ENCODE measurements at regions of chr1 and their contacts with region 1.

Region 1: GRCh38 chr1:150578965-150579798 is at the start of gene MCL1:
- DNase-seq: peak; percentile 96
- H3K4me3 ChIP-seq: peak within 1 kb of the TSS; percentile 77 to 97 (median 85)
- H3K27ac ChIP-seq: peak within 1 kb of the TSS; percentile 89
- H3K4me1 ChIP-seq: peaks cover 19% of the 10 kb centered on the region
- H3K27me3 ChIP-seq: no peaks in the 10 kb centered on the region
- CTCF ChIP-seq: peak in 1 of 2 donors; percentile 9
- total RNA-seq, gene MCL1: 289 to 455 TPM

Region 2: DNA sequence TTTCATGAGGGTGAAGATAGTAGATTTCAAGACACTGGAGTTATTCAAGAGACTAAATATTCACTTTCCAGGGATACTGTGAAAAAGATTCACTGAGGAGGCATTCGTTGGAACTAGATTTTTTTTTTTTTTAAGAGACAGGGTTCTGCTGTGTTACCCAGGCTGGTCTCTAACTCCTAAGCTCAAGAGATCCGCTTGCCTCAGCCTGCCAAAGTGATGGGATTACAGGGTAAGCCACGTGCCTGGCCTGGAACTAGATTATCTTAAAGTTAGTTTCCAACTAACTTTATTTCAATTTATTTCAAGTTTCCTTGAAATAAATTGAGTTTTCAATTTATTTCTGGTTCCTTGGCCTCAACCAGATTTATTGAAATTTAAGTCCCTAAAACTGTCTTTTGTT is 24.5 kb after region 1 on chr1:
- CTCF ChIA-PET with region 1: no interaction called
- dilution Hi-C with region 1: no loop called
- in situ Hi-C with region 1: no loop called
- intact Hi-C with region 1: loop called (anchors 1 kb)
- DNase-seq: no peak
- H3K4me3 ChIP-seq: no peak overlapping the region
- H3K27ac ChIP-seq: peak overlapping the region; percentile 97
- H3K4me1 ChIP-seq: peaks cover 22% of the 10 kb centered on the region
- H3K27me3 ChIP-seq: no peaks in the 10 kb centered on the region
- CTCF ChIP-seq: no peak

Region 3: GRCh38 chr1:150613061-150613920 is 34.1 kb after region 1 on chr1:
- CTCF ChIA-PET with region 1: no interaction called
- dilution Hi-C with region 1: no loop called
- in situ Hi-C with region 1: no loop called
- intact Hi-C with region 1: loop called (anchors 1 kb)
- DNase-seq: peak; percentile 93
- H3K4me3 ChIP-seq: no peak overlapping the region
- H3K27ac ChIP-seq: peak overlapping the region; percentile 99
- H3K4me1 ChIP-seq: peaks cover 53% of the 10 kb centered on the region
- H3K27me3 ChIP-seq: no peaks in the 10 kb centered on the region
- CTCF ChIP-seq: no peak

Region 4: DNA sequence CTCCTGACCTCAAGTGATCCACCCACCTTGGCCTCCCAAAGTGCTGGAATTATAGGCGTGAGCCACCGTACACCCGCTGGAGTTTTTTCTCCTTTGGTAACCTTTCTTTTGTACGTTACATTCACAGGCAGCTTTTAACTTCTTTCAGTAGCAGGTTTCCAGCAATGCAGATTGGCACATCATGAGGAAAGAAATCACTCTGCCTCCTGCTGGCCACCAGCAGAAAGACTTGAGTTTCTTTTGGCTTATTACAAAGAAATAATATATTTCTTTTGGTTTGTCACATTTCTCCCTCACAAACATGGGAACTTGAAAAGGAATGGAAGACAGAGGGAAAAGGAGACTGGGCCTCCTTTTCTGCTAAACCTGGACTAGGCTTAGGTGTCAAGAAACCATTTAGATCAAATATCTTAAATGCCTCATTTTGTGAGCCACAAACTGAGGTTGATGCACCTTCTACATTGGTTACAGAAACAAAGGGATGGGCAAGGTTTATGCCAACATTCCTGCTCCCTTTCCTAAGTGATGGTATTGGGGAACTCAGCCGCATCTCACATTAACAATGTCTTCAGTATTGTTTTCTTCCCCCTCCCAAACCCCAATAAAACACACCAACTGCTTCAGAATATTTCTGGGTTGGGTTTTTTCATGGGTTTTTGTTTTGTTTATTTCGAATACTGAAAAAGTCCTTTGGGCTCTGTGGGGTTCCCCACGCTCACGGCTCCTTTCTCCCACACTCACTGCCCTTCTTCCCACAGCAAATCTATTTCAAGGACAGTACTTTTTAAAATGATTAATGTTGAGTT is 42.5 kb after region 1 on chr1:
- CTCF ChIA-PET with region 1: no interaction called
- dilution Hi-C with region 1: loop called (anchors 5 kb)
- in situ Hi-C with region 1: no loop called
- intact Hi-C with region 1: loop called (anchors 1 kb)
- DNase-seq: no peak
- H3K4me3 ChIP-seq: no peak overlapping the region
- H3K27ac ChIP-seq: peak overlapping the region; percentile 30
- H3K4me1 ChIP-seq: peaks cover 62% of the 10 kb centered on the region
- H3K27me3 ChIP-seq: no peaks in the 10 kb centered on the region
- CTCF ChIP-seq: peak; percentile 60 to 65

Region 5: DNA sequence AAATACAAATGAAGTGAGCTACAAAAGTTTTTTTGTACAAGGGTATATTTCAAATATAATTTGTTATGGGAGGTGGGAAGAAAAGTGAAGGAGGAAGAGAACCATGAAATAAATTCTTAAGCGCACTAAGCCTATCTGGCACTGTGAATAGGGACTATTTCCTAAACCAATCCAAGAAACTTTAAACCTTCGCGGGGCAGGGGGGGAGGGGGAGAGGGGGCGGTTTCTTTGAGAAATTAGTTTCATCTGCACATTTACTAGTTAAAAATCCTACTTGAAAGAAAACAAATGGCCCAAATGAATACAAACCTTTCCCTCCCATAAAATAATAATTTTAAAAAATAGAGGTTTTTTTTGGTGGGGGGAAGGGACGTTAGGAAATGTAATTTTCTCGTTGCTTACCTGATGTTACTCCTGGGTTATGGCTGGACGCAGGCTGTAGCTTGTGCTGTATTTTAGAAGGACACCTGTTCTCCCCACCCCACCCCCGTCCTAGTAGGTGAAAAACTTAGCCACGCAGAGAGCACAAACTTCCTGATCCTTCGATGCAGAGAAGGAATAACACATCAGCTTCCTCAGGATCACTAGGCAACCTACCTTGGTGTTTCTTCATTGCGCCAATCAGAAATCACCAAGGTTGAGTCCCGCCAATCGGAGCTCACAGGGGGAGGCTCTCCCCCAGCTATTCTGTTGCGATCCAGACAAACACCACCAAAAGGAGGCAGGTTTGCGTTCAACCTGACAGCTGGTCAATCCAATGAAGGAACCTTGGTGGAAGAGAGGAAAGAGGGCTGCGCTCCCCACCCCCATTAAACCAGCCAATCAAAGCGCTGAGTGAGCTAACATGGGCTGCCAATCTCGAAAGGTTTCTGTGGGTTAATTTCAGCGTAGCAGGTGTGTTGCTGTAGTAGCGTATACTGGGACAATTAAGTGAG is 117.7 kb after region 1 on chr1 and contains the start of gene GOLPH3L:
- CTCF ChIA-PET with region 1: no interaction called
- dilution Hi-C with region 1: no loop called
- in situ Hi-C with region 1: no loop called
- intact Hi-C with region 1: loop called (anchors 5 kb)
- DNase-seq: peak; percentile 100
- H3K4me3 ChIP-seq: peak within 1 kb of the TSS; percentile 59 to 90 (median 60)
- H3K27ac ChIP-seq: peak within 1 kb of the TSS; percentile 65
- H3K4me1 ChIP-seq: peaks cover 8% of the 10 kb centered on the region
- H3K27me3 ChIP-seq: no peaks in the 10 kb centered on the region
- CTCF ChIP-seq: peak in 1 of 2 donors; percentile 31
- total RNA-seq, gene GOLPH3L: 11.7 to 22.4 TPM

Measured in mammary epithelial cell (primary cell).